Calu3 (cell line): ENCODE measurements at regions of chr7 and their contacts with region 1.

Region 1: DNA sequence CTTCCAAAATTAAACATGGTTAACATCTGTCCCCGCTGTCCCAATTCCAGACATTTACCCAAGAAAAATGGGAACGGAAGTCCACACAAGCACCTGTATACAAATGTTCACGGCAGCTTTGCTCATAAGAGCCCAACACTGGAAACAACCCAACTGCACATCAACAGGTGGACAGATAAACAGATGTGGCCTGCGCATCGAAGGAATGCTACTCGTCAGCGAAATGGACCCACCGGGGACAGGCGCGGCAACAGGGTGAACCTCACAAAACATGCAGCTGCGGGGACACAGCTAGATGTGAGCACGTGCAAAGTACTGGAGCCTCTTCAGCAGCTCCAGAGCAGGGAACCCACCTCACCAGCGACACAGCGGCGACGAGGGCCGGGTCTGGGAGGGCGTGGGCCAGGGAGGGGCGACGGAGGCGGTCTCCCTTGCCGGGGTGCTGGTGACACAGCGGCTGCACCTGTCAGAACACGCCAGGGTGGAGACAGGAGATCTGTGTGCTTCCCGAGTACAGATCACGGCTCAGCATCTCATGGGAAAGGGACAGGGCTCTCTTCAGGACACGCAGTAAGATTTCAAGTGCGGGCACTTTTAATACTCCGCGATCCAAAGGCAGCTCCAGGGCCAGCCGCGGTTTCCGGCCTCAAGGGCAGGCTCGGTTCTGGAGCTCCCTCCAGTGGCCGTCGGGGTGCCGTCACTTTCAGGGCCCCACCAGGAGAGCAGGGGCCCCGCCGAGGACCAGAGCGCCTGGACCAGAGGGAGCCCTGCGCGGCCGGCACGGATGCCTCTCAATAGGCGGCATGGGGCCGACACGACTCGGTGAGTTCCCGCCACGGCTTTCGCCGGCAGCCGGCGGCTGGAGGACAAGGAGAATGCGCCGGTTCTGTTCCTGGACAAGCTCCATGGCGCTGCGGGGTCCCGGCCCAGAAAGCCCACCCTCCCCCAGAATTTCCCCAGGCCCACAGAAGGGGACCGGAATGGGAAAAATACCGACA is 21.2 kb downstream of the GPR146 start:
- DNase-seq: peak; percentile 96
- H3K4me3 Mint-ChIP-seq: no peak overlapping the region
- H3K27ac Mint-ChIP-seq: no peak overlapping the region
- H3K4me1 Mint-ChIP-seq: peaks cover 10% of the 10 kb centered on the region
- H3K27me3 Mint-ChIP-seq: no peaks in the 10 kb centered on the region
- CTCF ChIP-seq: peak; percentile 98

Region 2: GRCh38 chr7:171364-171904 is 894.1 kb before region 1 on chr7:
- CTCF ChIA-PET with region 1: no interaction called
- intact Hi-C with region 1: no loop called
- DNase-seq: no peak
- H3K4me3 Mint-ChIP-seq: no peak overlapping the region
- H3K27ac Mint-ChIP-seq: no peak overlapping the region
- H3K4me1 Mint-ChIP-seq: no peaks in the 10 kb centered on the region
- H3K27me3 Mint-ChIP-seq: peaks cover 76% of the 10 kb centered on the region
- CTCF ChIP-seq: no peak

Region 3: DNA sequence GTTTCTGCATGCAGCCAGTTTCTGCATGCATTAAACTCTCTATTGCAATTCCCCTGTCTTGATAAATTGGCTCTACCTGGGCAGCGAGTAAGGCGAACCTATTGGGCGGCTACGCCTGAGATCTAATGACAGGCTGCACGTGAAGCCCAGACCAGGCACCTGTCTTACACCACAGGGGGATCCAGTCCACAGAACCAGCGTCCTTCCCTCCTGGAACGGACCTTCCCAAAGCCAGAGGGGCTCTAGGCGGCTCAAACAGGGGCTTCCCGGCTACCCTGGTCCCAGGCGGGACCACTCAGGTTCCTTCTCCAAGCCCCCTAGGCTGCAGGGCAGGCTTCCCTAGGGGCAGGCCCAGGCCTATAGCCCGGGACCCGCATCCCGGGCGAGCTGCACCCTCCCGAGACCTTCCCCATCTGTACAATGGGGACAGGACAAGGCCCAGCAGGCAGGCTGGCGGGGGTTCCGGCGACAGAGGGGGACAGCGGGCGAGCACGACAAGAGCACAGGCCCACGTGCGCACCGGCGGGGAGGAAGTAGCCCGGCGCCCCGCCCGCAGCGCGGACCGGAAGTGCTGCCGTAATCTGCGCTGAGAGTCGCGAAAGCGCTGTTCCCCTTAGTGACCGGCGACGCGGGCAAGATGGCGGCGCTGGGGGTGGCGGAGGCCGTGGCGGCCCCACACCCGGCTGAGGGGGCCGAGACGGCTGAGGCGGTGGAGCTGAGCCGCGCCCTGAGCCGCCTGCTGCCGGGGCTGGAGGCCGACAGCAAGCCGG is 339.3 kb before region 1 on chr7 and contains the start of gene DNAAF5:
- CTCF ChIA-PET with region 1: no interaction called
- intact Hi-C with region 1: no loop called
- DNase-seq: peak; percentile 94
- H3K4me3 Mint-ChIP-seq: peak within 1 kb of the TSS; percentile 71
- H3K27ac Mint-ChIP-seq: peak within 1 kb of the TSS; percentile 84
- H3K4me1 Mint-ChIP-seq: peaks cover 11% of the 10 kb centered on the region
- H3K27me3 Mint-ChIP-seq: no peaks in the 10 kb centered on the region
- CTCF ChIP-seq: no peak
- total RNA-seq, gene DNAAF5: 54.0 and 57.2 TPM in 2 replicates

Region 4: GRCh38 chr7:778641-779451 is 286.7 kb before region 1 on chr7:
- CTCF ChIA-PET with region 1: no interaction called
- intact Hi-C with region 1: no loop called
- DNase-seq: no peak
- H3K4me3 Mint-ChIP-seq: no peak overlapping the region
- H3K27ac Mint-ChIP-seq: no peak overlapping the region
- H3K4me1 Mint-ChIP-seq: no peaks in the 10 kb centered on the region
- H3K27me3 Mint-ChIP-seq: no peaks in the 10 kb centered on the region
- CTCF ChIP-seq: no peak

Region 5: GRCh38 chr7:977326-978048 is 88.1 kb before region 1 on chr7:
- CTCF ChIA-PET with region 1: interaction called, 15 read pairs
- intact Hi-C with region 1: no loop called
- DNase-seq: peak; percentile 91
- H3K4me3 Mint-ChIP-seq: peak overlapping the region; percentile 93
- H3K27ac Mint-ChIP-seq: peak overlapping the region; percentile 80
- H3K4me1 Mint-ChIP-seq: peaks cover 29% of the 10 kb centered on the region
- H3K27me3 Mint-ChIP-seq: no peaks in the 10 kb centered on the region
- CTCF ChIP-seq: no peak

Region 6: DNA sequence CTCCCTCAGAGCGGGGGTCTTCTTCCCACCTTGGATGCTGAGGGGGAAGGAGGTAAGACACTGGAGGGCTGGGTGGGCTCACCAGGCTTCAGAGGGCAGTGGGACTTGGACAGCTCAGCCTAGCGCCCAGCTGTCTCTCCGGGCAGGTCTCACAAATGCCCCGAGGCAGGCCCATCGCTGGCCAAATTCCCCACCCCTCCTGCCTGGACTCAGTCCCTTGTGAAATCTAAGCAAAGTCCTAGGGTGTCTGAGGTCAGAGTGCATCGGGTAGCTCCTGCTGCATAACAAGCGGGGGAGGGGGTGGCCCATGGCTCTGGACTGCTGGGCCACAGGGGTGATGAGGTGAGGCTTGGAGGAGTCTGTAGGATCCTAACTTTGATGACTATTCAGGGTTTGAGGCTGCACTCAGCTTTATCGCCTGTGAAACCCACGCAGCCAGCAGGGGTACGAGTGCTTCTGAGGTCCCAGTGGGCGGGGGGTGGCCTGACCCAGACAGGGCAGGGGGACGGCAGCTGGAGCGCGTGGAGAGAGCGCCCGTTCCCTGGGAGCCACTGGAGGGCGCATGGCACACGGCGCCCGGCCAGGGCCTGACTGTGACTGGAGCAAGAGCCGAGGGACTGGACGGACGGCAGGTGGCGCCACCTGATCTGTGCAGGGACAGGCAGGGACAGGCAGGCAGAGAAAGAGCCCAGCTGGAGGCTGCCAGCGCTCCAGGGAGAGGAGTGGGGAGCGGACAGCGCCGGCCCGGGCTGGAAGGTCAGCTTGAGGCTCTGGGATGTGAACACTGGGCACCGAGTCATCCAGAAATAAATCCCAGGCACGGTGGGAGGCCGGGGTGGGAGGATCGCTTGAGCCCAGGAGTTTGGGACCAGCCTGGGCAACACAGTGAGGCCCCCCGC is 72.6 kb before region 1 on chr7:
- CTCF ChIA-PET with region 1: interaction called, 153 read pairs
- intact Hi-C with region 1: loop called (anchors 1 kb)
- DNase-seq: peak; percentile 99
- H3K4me3 Mint-ChIP-seq: peak overlapping the region; percentile 36
- H3K27ac Mint-ChIP-seq: peak overlapping the region; percentile 87
- H3K4me1 Mint-ChIP-seq: peaks cover 13% of the 10 kb centered on the region
- H3K27me3 Mint-ChIP-seq: no peaks in the 10 kb centered on the region
- CTCF ChIP-seq: peak; percentile 100

Region 7: DNA sequence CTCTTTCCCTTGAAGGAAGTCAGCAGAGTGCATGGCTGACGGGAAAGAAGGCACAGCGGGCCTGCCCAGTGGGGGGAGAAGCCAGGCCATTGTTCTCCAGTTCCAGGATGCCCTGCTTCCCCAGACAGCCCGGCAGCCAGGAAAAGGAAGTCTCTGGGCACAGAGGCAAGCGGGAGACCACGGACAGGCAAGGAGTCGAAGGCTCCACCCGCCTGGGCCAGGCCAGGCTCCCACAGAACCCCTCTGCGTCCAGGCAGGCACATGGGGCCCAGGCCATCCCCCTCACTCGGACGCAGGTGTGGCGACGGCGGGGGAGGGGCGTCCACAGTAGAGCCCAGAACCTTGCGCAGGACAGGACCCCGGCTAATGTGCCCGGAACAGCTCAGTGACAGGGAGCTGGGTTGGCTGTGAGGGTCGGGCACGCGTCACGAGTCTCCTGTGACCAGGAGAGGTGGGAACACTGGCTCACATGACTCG is 12.5 kb before region 1 on chr7:
- CTCF ChIA-PET with region 1: interaction called, 15 read pairs
- intact Hi-C with region 1: no loop called
- DNase-seq: no peak
- H3K4me3 Mint-ChIP-seq: no peak overlapping the region
- H3K27ac Mint-ChIP-seq: no peak overlapping the region
- H3K4me1 Mint-ChIP-seq: no peaks in the 10 kb centered on the region
- H3K27me3 Mint-ChIP-seq: no peaks in the 10 kb centered on the region
- CTCF ChIP-seq: no peak

Region 8: GRCh38 chr7:1403638-1404459 is 338.3 kb after region 1 on chr7:
- CTCF ChIA-PET with region 1: no interaction called
- intact Hi-C with region 1: no loop called
- DNase-seq: peak; percentile 38
- H3K4me3 Mint-ChIP-seq: no peak overlapping the region
- H3K27ac Mint-ChIP-seq: no peak overlapping the region
- H3K4me1 Mint-ChIP-seq: peaks cover 21% of the 10 kb centered on the region
- H3K27me3 Mint-ChIP-seq: peaks cover 98% of the 10 kb centered on the region
- CTCF ChIP-seq: no peak